IMR-90 (cell line): ENCODE measurements at regions of chr7 and their contacts with region 1.

Region 1: DNA sequence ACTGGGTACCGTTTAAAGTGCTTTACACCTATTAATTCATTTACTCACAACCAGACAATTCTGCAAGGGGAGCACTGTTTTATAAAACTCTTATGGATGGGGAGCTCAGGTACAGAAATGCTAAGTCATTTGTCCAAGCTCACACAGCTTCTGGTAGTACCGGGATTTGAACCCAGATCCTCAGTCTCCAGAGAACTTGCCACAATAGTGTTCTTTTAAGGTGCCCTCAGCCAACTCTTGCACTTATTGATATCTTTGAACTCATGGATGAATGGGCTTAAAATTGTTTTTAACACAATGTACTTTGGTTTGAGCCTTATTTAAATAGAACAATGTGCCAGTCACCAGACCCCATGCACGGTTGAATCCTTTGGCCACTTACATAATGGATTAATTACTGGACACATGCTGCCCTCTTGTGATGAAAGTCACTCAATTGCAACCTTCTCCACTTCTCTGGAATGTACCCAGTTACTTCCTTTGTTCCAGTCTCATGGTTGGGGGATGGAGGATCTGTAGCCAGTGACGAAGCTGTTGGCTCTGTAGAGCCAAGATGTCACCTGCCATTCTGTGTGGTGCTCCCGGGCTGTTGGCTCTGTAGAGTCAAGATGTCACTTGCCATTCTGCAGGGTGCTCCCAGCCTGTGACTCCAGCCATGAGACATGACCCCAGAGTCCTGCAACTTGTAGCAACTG is 65.6 kb downstream of the NOD1 start:
- DNase-seq: peak; percentile 83
- ATAC-seq: peak; percentile 99
- H3K4me3 ChIP-seq: no peak overlapping the region
- H3K27ac ChIP-seq: no peak overlapping the region
- H3K4me1 ChIP-seq: no peaks in the 10 kb centered on the region
- H3K27me3 ChIP-seq: peaks cover 2% of the 10 kb centered on the region; the same call in 1 of the 2 replicates
- CTCF ChIP-seq: peak; percentile 78
- POLR2A ChIP-seq: 0 out of 2 replicates have a peak, but pooled peaks have one; percentile 36
- RAD21 ChIP-seq: peak; percentile 91

Region 2: DNA sequence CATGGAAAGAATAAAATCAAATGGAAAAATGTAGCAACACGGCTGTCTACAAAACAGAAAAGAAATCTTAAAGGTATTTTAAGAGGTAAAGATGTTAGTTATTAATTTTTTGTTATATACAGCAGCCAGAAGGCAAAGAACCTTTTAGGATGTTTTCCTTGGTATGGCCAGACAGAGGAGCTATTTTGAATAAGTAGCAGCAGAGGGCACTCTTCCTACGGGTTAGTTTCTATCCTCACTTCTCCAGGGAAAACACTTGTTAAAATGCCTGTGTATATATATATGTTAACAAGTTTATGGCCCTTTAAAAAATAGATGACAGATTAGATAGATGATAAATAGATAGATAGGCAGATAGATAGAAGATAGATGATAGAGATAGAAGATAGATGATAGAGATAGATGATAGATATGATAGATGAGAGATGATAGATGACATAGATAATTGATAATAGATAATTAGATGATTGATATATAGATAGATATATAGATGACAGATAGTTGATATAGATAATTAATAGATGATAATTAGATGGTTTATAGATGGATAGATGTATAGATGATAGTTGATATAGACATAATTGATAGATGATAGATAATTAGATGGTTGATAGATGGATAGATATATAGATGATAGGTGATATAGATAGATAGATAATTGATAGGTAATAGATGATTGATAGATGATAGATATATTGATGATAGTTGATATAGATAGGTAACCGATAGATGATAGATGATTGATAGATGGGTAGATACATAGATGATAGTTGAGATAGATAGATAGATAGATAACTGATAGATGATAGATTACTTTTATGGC is 664.5 kb before region 1 on chr7:
- CTCF ChIA-PET with region 1: no interaction called
- POLR2A ChIA-PET with region 1: no interaction called
- dilution Hi-C with region 1: no loop called
- in situ Hi-C with region 1: no loop called
- intact Hi-C with region 1: loop called (anchors 2 kb)
- DNase-seq: peak; percentile 45
- ATAC-seq: peak; percentile 95
- H3K4me3 ChIP-seq: no peak overlapping the region
- H3K27ac ChIP-seq: no peak overlapping the region
- H3K4me1 ChIP-seq: no peaks in the 10 kb centered on the region
- H3K27me3 ChIP-seq: peaks cover 2% of the 10 kb centered on the region; the same call in 1 of the 2 replicates
- CTCF ChIP-seq: peak; percentile 53
- POLR2A ChIP-seq: no peak
- RAD21 ChIP-seq: peak; percentile 51

Region 3: GRCh38 chr7:30164567-30164966 is 248.4 kb before region 1 on chr7:
- CTCF ChIA-PET with region 1: interaction called, 4 read pairs
- POLR2A ChIA-PET with region 1: no interaction called
- dilution Hi-C with region 1: no loop called
- in situ Hi-C with region 1: loop called (anchors 5 kb)
- intact Hi-C with region 1: loop called (anchors 1 kb)
- DNase-seq: peak; percentile 54
- ATAC-seq: peak; percentile 69
- H3K4me3 ChIP-seq: no peak overlapping the region
- H3K27ac ChIP-seq: no peak overlapping the region
- H3K4me1 ChIP-seq: peaks cover 5% of the 10 kb centered on the region
- H3K27me3 ChIP-seq: no peaks in the 10 kb centered on the region
- CTCF ChIP-seq: peak; percentile 71
- POLR2A ChIP-seq: no peak
- RAD21 ChIP-seq: peak; percentile 70

Region 4: GRCh38 chr7:30238721-30239441 is 174.1 kb before region 1 on chr7:
- CTCF ChIA-PET with region 1: no interaction called
- POLR2A ChIA-PET with region 1: no interaction called
- dilution Hi-C with region 1: no loop called
- in situ Hi-C with region 1: no loop called
- intact Hi-C with region 1: no loop called
- DNase-seq: no peak
- ATAC-seq: no peak
- H3K4me3 ChIP-seq: no peak overlapping the region
- H3K27ac ChIP-seq: no peak overlapping the region
- H3K4me1 ChIP-seq: no peaks in the 10 kb centered on the region
- H3K27me3 ChIP-seq: no peaks in the 10 kb centered on the region; the same call in 1 of the 2 replicates
- CTCF ChIP-seq: no peak
- POLR2A ChIP-seq: no peak
- RAD21 ChIP-seq: no peak

Region 5: GRCh38 chr7:30276203-30276900 is 136.6 kb before region 1 on chr7:
- CTCF ChIA-PET with region 1: interaction called, 7 read pairs
- POLR2A ChIA-PET with region 1: no interaction called
- dilution Hi-C with region 1: no loop called
- in situ Hi-C with region 1: loop called (anchors 5 kb)
- intact Hi-C with region 1: loop called (anchors 1 kb)
- DNase-seq: peak; percentile 62
- ATAC-seq: peak; percentile 94
- H3K4me3 ChIP-seq: no peak overlapping the region
- H3K27ac ChIP-seq: no peak overlapping the region
- H3K4me1 ChIP-seq: no peaks in the 10 kb centered on the region
- H3K27me3 ChIP-seq: peaks cover 23% of the 10 kb centered on the region
- CTCF ChIP-seq: peak; percentile 76
- POLR2A ChIP-seq: no peak
- RAD21 ChIP-seq: peak; percentile 86

Region 6: GRCh38 chr7:30284298-30285066 is 128.5 kb before region 1 on chr7 and contains the start of gene ZNRF2:
- CTCF ChIA-PET with region 1: no interaction called
- POLR2A ChIA-PET with region 1: no interaction called
- dilution Hi-C with region 1: no loop called
- in situ Hi-C with region 1: loop called (anchors 5 kb)
- intact Hi-C with region 1: loop called (anchors 2 kb)
- DNase-seq: peak; percentile 95
- ATAC-seq: peak; percentile 86
- H3K4me3 ChIP-seq: peak within 1 kb of the TSS; percentile 77
- H3K27ac ChIP-seq: no peak within 1 kb of the TSS; the same call in 1 of the 2 replicates
- H3K4me1 ChIP-seq: no peaks in the 10 kb centered on the region
- H3K27me3 ChIP-seq: 0 out of 2 replicates have a peak, but pooled peaks cover 3% of the 10 kb centered on the region
- CTCF ChIP-seq: peak; percentile 47
- POLR2A ChIP-seq: no peak
- RAD21 ChIP-seq: peak; percentile 15; the same call in 1 of the 2 replicates
- total RNA-seq, gene ZNRF2: 0.54 and 0.83 TPM in 2 replicates

Region 7: DNA sequence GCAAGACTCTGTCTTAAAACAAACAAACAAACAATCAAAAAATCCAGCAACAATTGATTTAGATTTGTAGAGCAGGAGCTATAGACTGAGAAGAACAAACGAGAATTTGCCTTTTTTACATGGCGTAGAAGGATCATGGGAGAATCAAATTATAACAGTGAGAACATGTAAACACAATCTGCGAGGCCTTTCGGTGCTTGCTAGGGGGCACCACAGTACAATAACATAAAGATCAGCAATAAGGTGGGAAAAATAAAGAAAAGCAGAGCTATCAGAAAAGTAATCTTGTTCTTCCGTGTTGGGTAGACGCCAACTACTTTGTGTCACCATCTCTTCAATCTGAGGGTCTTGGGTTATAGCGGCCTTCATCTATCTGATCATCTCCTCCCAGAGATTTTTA is 16.6 kb before region 1 on chr7:
- CTCF ChIA-PET with region 1: no interaction called
- POLR2A ChIA-PET with region 1: no interaction called
- dilution Hi-C with region 1: no loop called
- in situ Hi-C with region 1: no loop called
- intact Hi-C with region 1: no loop called
- DNase-seq: no peak
- ATAC-seq: no peak
- H3K4me3 ChIP-seq: no peak overlapping the region
- H3K27ac ChIP-seq: no peak overlapping the region
- H3K4me1 ChIP-seq: no peaks in the 10 kb centered on the region
- H3K27me3 ChIP-seq: no peaks in the 10 kb centered on the region
- CTCF ChIP-seq: no peak
- POLR2A ChIP-seq: no peak
- RAD21 ChIP-seq: no peak